Astrocyte of the cerebellum (primary cell): ENCODE measurements at regions of chr7 and their contacts with region 1.

Region 1: DNA sequence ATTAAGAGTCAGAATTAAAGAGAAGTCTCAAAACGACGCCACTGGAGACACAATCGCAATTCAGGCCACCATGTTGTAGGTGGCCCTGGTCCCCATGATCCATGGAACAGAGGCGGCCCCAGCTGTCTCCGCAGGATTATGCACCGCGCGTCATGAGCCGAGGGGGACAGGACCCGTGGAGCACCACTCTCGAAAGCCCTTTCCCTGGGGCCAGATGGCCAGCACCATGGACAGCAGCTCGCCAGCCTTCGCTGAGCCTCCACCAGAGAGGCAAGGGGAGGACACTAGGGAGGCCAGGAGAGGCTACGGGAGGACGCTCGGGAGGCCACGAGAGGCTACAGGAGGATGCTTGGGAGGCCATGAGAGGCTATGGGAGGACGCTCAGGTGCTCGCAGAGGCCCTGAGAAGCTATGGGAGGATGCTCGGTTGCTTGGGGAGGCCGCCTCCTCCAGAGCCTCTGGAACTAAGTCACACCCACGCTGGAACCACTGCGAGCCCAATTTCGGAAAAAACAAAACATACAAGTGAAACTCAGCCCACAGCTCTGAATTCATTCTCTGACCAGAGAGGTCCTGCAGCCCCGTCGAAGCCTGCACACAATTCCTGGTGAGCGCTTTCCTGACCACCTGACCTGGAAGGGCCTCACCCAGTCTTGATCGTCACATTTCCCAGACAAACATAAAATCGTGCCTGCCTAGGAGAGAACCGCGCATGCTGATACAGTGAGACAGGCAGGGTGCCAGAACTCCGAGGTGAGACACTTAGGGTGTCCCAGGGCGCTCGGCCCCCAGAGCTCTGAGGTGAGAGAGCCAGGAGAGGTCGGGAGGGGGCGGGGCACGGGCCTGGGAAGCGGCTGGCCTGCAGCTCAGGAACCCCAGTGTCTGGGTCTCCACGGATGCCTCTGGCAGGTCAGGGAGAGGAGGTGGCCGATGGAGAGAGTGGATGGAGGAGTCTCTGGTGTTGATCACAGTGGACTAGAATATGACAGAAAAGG is 224.4 kb downstream of the PTPRN2 start:
- DNase-seq: no peak
- H3K4me3 ChIP-seq: no peak overlapping the region
- CTCF ChIP-seq: no peak

Region 2: DNA sequence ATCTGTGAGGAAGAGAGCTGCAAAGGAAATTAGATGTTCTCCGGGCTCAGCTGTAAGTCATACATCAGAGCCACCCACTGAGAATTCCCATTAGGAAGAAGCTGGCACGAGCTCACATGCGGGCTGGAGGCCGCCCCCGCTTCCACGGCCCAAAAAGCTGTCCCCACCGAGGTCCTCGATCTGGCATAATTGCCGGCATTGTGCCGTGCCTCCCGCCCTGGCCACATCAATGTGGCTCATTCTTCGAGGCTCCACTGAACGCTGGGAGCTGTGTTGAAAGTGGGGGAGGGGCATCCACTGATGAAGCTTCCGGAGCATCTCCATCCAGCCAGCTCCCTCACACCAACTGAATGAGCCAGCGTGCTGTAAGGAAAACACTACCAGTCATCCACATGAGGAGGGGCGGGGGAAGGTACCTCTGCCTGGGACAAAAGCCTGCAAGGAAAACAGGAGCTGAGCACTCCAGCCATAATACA is 51.3 kb after region 1 on chr7:
- in situ Hi-C with region 1: loop called (anchors 5 kb)
- DNase-seq: no peak
- H3K4me3 ChIP-seq: no peak overlapping the region
- CTCF ChIP-seq: no peak